HepG2 (cell line): ENCODE measurements at regions of chr1 and their contacts with region 1.

Region 1: GRCh38 chr1:243343970-243344937 is 88.4 kb downstream of the SDCCAG8 start:
- DNase-seq: peak; percentile 43
- ATAC-seq: peak; percentile 46; the same call in 2 of the 3 replicates
- H3K4me3 ChIP-seq: no peak overlapping the region
- H3K27ac ChIP-seq: no peak overlapping the region
- H3K4me1 ChIP-seq: no peaks in the 10 kb centered on the region
- H3K27me3 ChIP-seq: no peaks in the 10 kb centered on the region; a peak in 1 of 5 replicates
- CTCF ChIP-seq: peak; percentile 73
- EP300 ChIP-seq: no peak
- POLR2A ChIP-seq: no peak
- RAD21 ChIP-seq: peak; percentile 51; the same call in 1 of the 2 replicates

Region 2: GRCh38 chr1:243230914-243231313 is 113.3 kb before region 1 on chr1:
- CTCF ChIA-PET with region 1: no interaction called
- POLR2A ChIA-PET with region 1: no interaction called
- in situ Hi-C with region 1: no loop called
- intact Hi-C with region 1: no loop called
- DNase-seq: peak; percentile 15
- ATAC-seq: no peak
- H3K4me3 ChIP-seq: no peak overlapping the region
- H3K27ac ChIP-seq: no peak overlapping the region
- H3K4me1 ChIP-seq: peaks cover 26% of the 10 kb centered on the region
- H3K27me3 ChIP-seq: no peaks in the 10 kb centered on the region
- CTCF ChIP-seq: no peak
- EP300 ChIP-seq: no peak
- POLR2A ChIP-seq: no peak
- RAD21 ChIP-seq: no peak

Region 3: DNA sequence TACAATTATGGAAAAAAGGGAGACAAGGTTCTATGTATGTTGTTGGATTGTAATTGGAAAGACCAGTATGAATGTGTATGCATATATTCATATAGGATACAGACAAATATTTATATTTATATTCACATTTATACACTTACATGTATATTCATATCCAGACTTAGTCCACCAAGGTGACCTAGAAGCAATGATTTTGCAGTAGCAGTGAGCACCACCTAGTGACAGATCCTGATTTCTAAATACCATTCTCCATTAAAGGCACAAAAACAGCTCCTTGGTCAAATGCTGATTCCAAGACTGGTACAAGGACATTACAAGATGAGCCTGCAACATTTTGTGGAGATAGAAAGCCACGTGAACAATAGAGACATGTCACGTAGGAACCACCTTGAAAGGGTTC is 65.0 kb after region 1 on chr1:
- CTCF ChIA-PET with region 1: interaction called, 3 read pairs
- POLR2A ChIA-PET with region 1: no interaction called
- in situ Hi-C with region 1: no loop called
- intact Hi-C with region 1: loop called (anchors 2 kb)
- DNase-seq: peak; percentile 2
- ATAC-seq: no peak
- H3K4me3 ChIP-seq: no peak overlapping the region
- H3K27ac ChIP-seq: no peak overlapping the region
- H3K4me1 ChIP-seq: no peaks in the 10 kb centered on the region
- H3K27me3 ChIP-seq: no peaks in the 10 kb centered on the region
- CTCF ChIP-seq: no peak
- EP300 ChIP-seq: no peak
- POLR2A ChIP-seq: no peak
- RAD21 ChIP-seq: no peak

Region 4: GRCh38 chr1:243508303-243508713 is 164.1 kb after region 1 on chr1:
- CTCF ChIA-PET with region 1: no interaction called
- POLR2A ChIA-PET with region 1: no interaction called
- in situ Hi-C with region 1: no loop called
- intact Hi-C with region 1: loop called (anchors 10 kb)
- DNase-seq: no peak
- ATAC-seq: peak; percentile 11; the same call in 2 of the 3 replicates
- H3K4me3 ChIP-seq: no peak overlapping the region
- H3K27ac ChIP-seq: no peak overlapping the region
- H3K4me1 ChIP-seq: peaks cover 32% of the 10 kb centered on the region
- H3K27me3 ChIP-seq: no peaks in the 10 kb centered on the region
- CTCF ChIP-seq: no peak
- EP300 ChIP-seq: no peak
- POLR2A ChIP-seq: no peak
- RAD21 ChIP-seq: no peak

Region 5: GRCh38 chr1:243520831-243521230 is 176.6 kb after region 1 on chr1:
- CTCF ChIA-PET with region 1: no interaction called
- POLR2A ChIA-PET with region 1: no interaction called
- in situ Hi-C with region 1: no loop called
- intact Hi-C with region 1: no loop called
- DNase-seq: peak; percentile 13
- ATAC-seq: no peak
- H3K4me3 ChIP-seq: no peak overlapping the region
- H3K27ac ChIP-seq: no peak overlapping the region
- H3K4me1 ChIP-seq: peaks cover 9% of the 10 kb centered on the region; the same call in 1 of the 2 replicates
- H3K27me3 ChIP-seq: no peaks in the 10 kb centered on the region
- CTCF ChIP-seq: no peak
- EP300 ChIP-seq: no peak
- POLR2A ChIP-seq: no peak
- RAD21 ChIP-seq: no peak

Region 6: DNA sequence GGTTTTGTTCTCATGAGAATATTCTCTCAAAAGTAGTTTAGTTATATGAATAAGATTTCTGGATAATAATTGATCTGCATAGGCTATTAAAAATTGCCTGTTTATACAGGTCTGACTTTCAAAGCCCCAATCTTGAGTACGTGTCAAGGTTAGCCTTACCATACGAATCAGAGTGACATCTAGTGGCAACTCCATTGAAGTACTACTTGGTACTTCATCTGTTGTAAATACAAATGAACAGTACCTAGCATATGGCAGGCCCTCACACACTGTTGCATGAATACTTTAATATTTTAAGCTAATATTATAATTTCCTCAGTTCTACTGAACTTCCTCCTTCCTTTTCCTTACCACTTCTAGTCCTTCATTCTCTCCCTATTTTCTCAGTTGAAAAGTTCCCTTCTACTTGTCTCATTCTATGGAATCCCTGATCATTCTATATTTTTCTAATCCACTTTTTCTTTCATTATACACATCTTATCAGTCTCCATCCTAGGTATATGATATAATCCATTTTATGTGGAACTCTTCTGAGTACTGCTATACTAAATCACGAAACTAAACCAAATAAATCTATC is 404.5 kb after region 1 on chr1:
- CTCF ChIA-PET with region 1: interaction called, 33 read pairs
- POLR2A ChIA-PET with region 1: no interaction called
- in situ Hi-C with region 1: loop called (anchors 10 kb)
- intact Hi-C with region 1: loop called (anchors 1 kb)
- DNase-seq: peak; percentile 49
- ATAC-seq: peak; percentile 92
- H3K4me3 ChIP-seq: no peak overlapping the region
- H3K27ac ChIP-seq: no peak overlapping the region
- H3K4me1 ChIP-seq: no peaks in the 10 kb centered on the region
- H3K27me3 ChIP-seq: no peaks in the 10 kb centered on the region
- CTCF ChIP-seq: peak; percentile 79
- EP300 ChIP-seq: no peak
- POLR2A ChIP-seq: no peak
- RAD21 ChIP-seq: no peak